ENCODE measurements at regions of chr17 and their contacts with region 1.

Region 1: GRCh38 chr17:55699181-55699860 is 23.3 kb downstream of the TMEM100 start:
- DNase-seq: no peak
- ATAC-seq: no peak
- H3K4me3 ChIP-seq: no peak overlapping the region
- H3K4me3 Mint-ChIP-seq: no peak overlapping the region
- H3K27ac ChIP-seq: no peak overlapping the region
- H3K27ac Mint-ChIP-seq: no peak overlapping the region
- H3K4me1 ChIP-seq: no peaks in the 10 kb centered on the region
- H3K4me1 Mint-ChIP-seq: no peaks in the 10 kb centered on the region
- H3K27me3 ChIP-seq: peaks cover 0 to 10% of the 10 kb centered on the region in 2 experiments
- H3K27me3 Mint-ChIP-seq: peaks cover 28 to 57% of the 10 kb centered on the region in 2 donors

Region 2: DNA sequence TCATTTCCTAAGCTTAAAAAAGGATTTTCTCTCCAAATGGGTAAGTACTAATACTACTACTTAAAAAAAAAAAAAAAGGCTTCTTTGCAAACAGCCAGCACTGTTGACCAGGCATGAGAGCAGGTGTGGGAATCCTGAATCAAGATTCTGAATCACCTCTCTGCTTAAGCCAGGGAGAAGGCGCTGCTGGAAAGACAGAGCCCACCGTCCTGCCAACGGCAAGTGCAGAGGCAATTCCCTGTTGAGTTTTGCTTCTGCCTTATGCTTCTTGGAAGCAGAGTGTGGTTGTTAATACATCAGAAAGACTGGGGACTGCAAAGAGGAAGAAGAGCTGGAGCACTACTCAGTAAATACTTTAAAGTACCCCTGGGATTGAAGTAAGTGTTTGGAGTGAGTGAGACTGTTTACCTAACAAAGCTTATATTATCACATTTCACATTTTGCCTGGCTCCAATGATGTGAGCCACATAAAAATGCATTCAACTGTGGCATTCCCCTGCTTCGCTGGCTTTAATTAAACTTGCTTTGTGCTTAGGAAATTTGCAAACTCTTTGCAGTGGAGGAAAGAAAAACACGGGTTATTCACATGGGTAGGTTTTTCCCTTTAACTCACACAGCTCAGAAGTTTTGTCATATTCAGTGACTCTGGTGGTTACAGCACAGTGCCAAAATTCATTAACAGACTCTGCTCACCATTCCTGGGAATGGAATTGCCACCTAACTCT is 1962.6 kb before region 1 on chr17:
- CTCF ChIA-PET with region 1: no interaction called
- POLR2A ChIA-PET with region 1: no interaction called
- DNase-seq: no peak
- ATAC-seq: no peak
- H3K4me3 ChIP-seq: no peak overlapping the region
- H3K4me3 Mint-ChIP-seq: no peak overlapping the region
- H3K27ac ChIP-seq: no peak overlapping the region
- H3K27ac Mint-ChIP-seq: no peak overlapping the region
- H3K4me1 ChIP-seq: no peaks in the 10 kb centered on the region
- H3K4me1 Mint-ChIP-seq: no peaks in the 10 kb centered on the region
- H3K27me3 ChIP-seq: no peaks in the 10 kb centered on the region
- H3K27me3 Mint-ChIP-seq: no peaks in the 10 kb centered on the region

Region 3: GRCh38 chr17:55274355-55275255 is 424.7 kb before region 1 on chr17:
- CTCF ChIA-PET with region 1: no interaction called
- POLR2A ChIA-PET with region 1: interaction called in 1 of 2 experiments, 10 read pairs
- DNase-seq: no peak
- ATAC-seq: no peak
- H3K4me3 ChIP-seq: no peak overlapping the region
- H3K4me3 Mint-ChIP-seq: no peak overlapping the region
- H3K27ac ChIP-seq: no peak overlapping the region
- H3K27ac Mint-ChIP-seq: no peak overlapping the region
- H3K4me1 ChIP-seq: no peaks in the 10 kb centered on the region
- H3K4me1 Mint-ChIP-seq: peaks cover 0 to 14% (median 4%) of the 10 kb centered on the region in 3 donors
- H3K27me3 ChIP-seq: peaks cover 0 to 15% of the 10 kb centered on the region in 2 experiments
- H3K27me3 Mint-ChIP-seq: peaks cover 31 to 34% of the 10 kb centered on the region in 2 donors

Measured in T-cell (primary cell).